IMR-90 (cell line): ENCODE measurements at regions of chr21 and their contacts with region 1.

Region 1: GRCh38 chr21:45363921-45364467 is 41.0 kb upstream of the COL18A1 start:
- DNase-seq: peak; percentile 99
- ATAC-seq: peak; percentile 68
- H3K4me3 ChIP-seq: no peak overlapping the region
- H3K27ac ChIP-seq: peak overlapping the region; percentile 97
- H3K4me1 ChIP-seq: peaks cover 38% of the 10 kb centered on the region
- H3K27me3 ChIP-seq: no peaks in the 10 kb centered on the region
- CTCF ChIP-seq: no peak
- POLR2A ChIP-seq: peak; percentile 85
- RAD21 ChIP-seq: 0 out of 2 replicates have a peak, but pooled peaks have one; percentile 2

Region 2: GRCh38 chr21:45294509-45295291 is 69.3 kb before region 1 on chr21:
- CTCF ChIA-PET with region 1: no interaction called
- POLR2A ChIA-PET with region 1: interaction called, 4 read pairs
- dilution Hi-C with region 1: no loop called
- in situ Hi-C with region 1: no loop called
- intact Hi-C with region 1: loop called (anchors 1 kb)
- DNase-seq: peak; percentile 100
- ATAC-seq: peak; percentile 81
- H3K4me3 ChIP-seq: no peak overlapping the region
- H3K27ac ChIP-seq: peak overlapping the region; percentile 98
- H3K4me1 ChIP-seq: peaks cover 36% of the 10 kb centered on the region
- H3K27me3 ChIP-seq: no peaks in the 10 kb centered on the region
- CTCF ChIP-seq: no peak
- POLR2A ChIP-seq: peak; percentile 30
- RAD21 ChIP-seq: peak; percentile 50

Region 3: GRCh38 chr21:45330075-45330781 is 33.8 kb before region 1 on chr21:
- CTCF ChIA-PET with region 1: no interaction called
- POLR2A ChIA-PET with region 1: no interaction called
- dilution Hi-C with region 1: no loop called
- in situ Hi-C with region 1: no loop called
- intact Hi-C with region 1: loop called (anchors 2 kb)
- DNase-seq: peak; percentile 88
- ATAC-seq: peak; percentile 92
- H3K4me3 ChIP-seq: no peak overlapping the region
- H3K27ac ChIP-seq: peak overlapping the region; percentile 85
- H3K4me1 ChIP-seq: peaks cover 46% of the 10 kb centered on the region
- H3K27me3 ChIP-seq: no peaks in the 10 kb centered on the region
- CTCF ChIP-seq: no peak
- POLR2A ChIP-seq: no peak
- RAD21 ChIP-seq: no peak